WTC11 (cell line): ENCODE measurements at regions of chr2 and their contacts with region 1.

Region 1: GRCh38 chr2:69581774-69582581 is 61.6 kb downstream of the AAK1 start:
- DNase-seq: no peak
- ATAC-seq: no peak
- H3K4me3 Mint-ChIP-seq: no peak overlapping the region
- H3K27ac Mint-ChIP-seq: peak overlapping the region; percentile 87
- H3K4me1 Mint-ChIP-seq: peaks cover 49% of the 10 kb centered on the region
- H3K27me3 Mint-ChIP-seq: no peaks in the 10 kb centered on the region
- CTCF ChIP-seq: no peak

Region 2: GRCh38 chr2:69643602-69644505 is 61.9 kb after region 1 on chr2 and contains the start of gene AAK1:
- CTCF ChIA-PET with region 1: no interaction called
- POLR2A ChIA-PET with region 1: interaction called, 15 read pairs
- DNase-seq: peak; percentile 81
- ATAC-seq: peak; percentile 69
- H3K4me3 Mint-ChIP-seq: peak within 1 kb of the TSS; percentile 91
- H3K27ac Mint-ChIP-seq: peak within 1 kb of the TSS; percentile 91
- H3K4me1 Mint-ChIP-seq: peaks cover 47% of the 10 kb centered on the region
- H3K27me3 Mint-ChIP-seq: peaks cover 12% of the 10 kb centered on the region
- CTCF ChIP-seq: no peak
- total RNA-seq, gene AAK1: 32.3 to 35.7 TPM (median 35.6 TPM) in 3 replicates